Activated CD4-positive, alpha-beta T cell treated with anti-CD3 and anti-CD28 coated beads, Interleukin-2, amount 10 ng/mL, durations not matched to agents 24 days and 14 days (primary cell): ENCODE measurements at regions of chr2 and their contacts with region 1.

Region 1: DNA sequence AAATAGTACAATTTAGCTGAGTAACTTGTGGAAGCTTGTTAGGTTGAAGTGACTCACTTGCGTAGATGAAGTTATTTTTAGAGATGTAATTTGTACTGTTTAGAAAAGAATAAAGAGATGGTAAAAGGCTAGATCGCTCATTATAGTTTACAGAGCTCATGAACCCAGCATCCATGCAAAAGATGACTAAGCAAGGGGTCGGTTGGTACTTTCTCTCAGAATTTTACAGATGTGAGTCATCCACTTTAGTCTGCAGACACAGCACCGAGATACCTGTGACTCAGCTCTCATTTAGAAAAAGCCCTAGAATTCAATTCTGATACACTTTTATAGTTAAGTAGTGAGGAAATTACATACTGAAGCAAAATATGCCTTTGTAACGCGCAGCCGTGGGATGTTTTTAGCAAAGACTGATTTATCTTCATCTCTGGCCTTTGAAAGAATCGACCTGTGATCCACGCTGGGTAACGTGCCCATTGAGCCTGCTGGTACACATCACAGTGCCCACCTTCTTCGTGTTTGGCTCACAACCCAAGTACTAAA is 116.5 kb upstream of the FOSL2 start:
- DNase-seq: peak; percentile 66
- H3K4me3 Mint-ChIP-seq: no peak overlapping the region
- H3K27ac Mint-ChIP-seq: no peak overlapping the region
- H3K4me1 Mint-ChIP-seq: peaks cover 37% of the 10 kb centered on the region
- H3K27me3 Mint-ChIP-seq: no peaks in the 10 kb centered on the region

Region 2: GRCh38 chr2:27771548-27772335 is 504.4 kb before region 1 on chr2 and contains the start of gene MRPL33:
- intact Hi-C with region 1: loop called (anchors 5 kb)
- DNase-seq: peak; percentile 97
- H3K4me3 Mint-ChIP-seq: peak within 1 kb of the TSS; percentile 98
- H3K27ac Mint-ChIP-seq: peak within 1 kb of the TSS; percentile 97
- H3K4me1 Mint-ChIP-seq: peaks cover 23% of the 10 kb centered on the region
- H3K27me3 Mint-ChIP-seq: no peaks in the 10 kb centered on the region
- total RNA-seq, gene MRPL33: 59.0 and 59.6 TPM in 2 replicates

Region 3: DNA sequence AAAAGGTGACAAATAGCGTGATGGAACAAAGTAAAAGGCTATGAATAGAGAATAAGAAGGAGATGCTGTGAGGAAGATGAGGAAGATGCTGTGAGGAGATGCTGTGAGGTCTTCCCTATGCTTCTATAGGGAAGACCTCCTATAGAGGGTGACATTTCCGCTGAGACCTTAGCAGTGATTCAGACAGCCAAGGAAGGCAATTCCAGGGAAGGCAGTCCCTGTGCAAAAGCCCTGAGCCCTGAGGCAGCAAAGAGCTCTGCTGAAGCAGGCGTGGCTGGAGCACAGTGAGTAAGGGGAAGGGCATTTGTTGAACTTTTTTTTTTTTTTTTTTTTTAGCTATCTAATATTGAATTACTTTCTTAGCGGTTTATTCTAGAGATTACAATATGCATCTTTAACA is 26.1 kb before region 1 on chr2:
- intact Hi-C with region 1: loop called (anchors 1 kb)
- DNase-seq: no peak
- H3K4me3 Mint-ChIP-seq: no peak overlapping the region
- H3K27ac Mint-ChIP-seq: no peak overlapping the region
- H3K4me1 Mint-ChIP-seq: peaks cover 43% of the 10 kb centered on the region
- H3K27me3 Mint-ChIP-seq: no peaks in the 10 kb centered on the region